ENCODE measurements at regions of chr1 and their contacts with region 1.

Region 1: GRCh38 chr1:121458291-121459048 is 273.7 kb downstream of the SRGAP2C start:
- DNase-seq: no peak
- H3K4me3 Mint-ChIP-seq: no peak overlapping the region
- H3K27ac Mint-ChIP-seq: no peak overlapping the region
- H3K4me1 Mint-ChIP-seq: no peaks in the 10 kb centered on the region
- H3K27me3 Mint-ChIP-seq: no peaks in the 10 kb centered on the region
- CTCF ChIP-seq: no peak

Region 2: DNA sequence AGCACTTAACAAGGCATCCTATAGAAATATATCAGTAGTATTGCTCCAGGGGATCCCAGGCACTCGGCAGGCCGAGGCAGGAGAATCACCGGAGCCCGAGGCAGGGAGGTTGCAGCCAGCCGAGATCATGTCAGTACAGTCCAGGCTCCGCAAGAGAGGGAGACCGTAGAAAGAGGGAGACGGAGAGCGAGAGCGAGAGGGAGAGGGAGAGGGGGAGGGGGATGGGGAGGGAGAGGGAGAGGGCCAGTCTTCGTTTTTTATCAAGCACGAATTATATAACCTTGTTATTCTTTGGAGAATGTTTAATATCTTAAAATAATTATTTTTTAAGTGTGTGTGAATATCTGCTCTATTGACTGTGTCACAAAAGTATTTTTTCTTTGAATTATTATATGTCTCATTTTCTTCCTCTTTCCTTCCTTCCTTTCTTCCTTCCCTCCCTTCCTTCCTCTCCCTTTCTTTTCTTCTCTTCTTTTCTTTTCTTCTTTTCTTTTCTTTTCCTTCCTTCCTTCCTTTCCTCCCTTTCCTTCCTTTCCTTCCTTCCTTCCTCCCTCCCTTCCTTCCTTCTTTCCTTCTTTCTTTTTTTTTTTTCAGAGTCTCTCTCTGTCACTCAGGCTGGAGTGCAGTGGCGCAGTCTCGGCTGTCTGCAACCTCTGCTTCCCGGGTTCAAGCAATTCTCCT is 40.0 kb before region 1 on chr1:
- CTCF ChIA-PET with region 1: no interaction called
- intact Hi-C with region 1: loop called (anchors 10 kb)
- DNase-seq: no peak
- H3K4me3 Mint-ChIP-seq: no peak overlapping the region
- H3K27ac Mint-ChIP-seq: peak overlapping the region; percentile 12
- H3K4me1 Mint-ChIP-seq: peaks cover 11% of the 10 kb centered on the region
- H3K27me3 Mint-ChIP-seq: no peaks in the 10 kb centered on the region
- CTCF ChIP-seq: no peak